ENCODE measurements at regions of chr14 and their contacts with region 1.

Region 1: GRCh38 chr14:20613094-20614037 is 22.2 kb upstream of the RNASE12 start:
- DNase-seq: peak; percentile 66 to 95 (median 80)
- ATAC-seq: peak; percentile 84
- H3K4me3 ChIP-seq: peak overlapping the region; percentile 57
- H3K4me3 Mint-ChIP-seq: no peak overlapping the region
- H3K27ac ChIP-seq: peak overlapping the region in 1 of 2 experiments; percentile 42
- H3K27ac Mint-ChIP-seq: no peak overlapping the region
- H3K4me1 ChIP-seq: peaks cover 20% of the 10 kb centered on the region
- H3K4me1 Mint-ChIP-seq: peaks cover 7% of the 10 kb centered on the region
- H3K27me3 ChIP-seq: no peaks in the 10 kb centered on the region
- H3K27me3 Mint-ChIP-seq: peaks cover 2% of the 10 kb centered on the region
- CTCF ChIP-seq: peak; percentile 60

Region 2: DNA sequence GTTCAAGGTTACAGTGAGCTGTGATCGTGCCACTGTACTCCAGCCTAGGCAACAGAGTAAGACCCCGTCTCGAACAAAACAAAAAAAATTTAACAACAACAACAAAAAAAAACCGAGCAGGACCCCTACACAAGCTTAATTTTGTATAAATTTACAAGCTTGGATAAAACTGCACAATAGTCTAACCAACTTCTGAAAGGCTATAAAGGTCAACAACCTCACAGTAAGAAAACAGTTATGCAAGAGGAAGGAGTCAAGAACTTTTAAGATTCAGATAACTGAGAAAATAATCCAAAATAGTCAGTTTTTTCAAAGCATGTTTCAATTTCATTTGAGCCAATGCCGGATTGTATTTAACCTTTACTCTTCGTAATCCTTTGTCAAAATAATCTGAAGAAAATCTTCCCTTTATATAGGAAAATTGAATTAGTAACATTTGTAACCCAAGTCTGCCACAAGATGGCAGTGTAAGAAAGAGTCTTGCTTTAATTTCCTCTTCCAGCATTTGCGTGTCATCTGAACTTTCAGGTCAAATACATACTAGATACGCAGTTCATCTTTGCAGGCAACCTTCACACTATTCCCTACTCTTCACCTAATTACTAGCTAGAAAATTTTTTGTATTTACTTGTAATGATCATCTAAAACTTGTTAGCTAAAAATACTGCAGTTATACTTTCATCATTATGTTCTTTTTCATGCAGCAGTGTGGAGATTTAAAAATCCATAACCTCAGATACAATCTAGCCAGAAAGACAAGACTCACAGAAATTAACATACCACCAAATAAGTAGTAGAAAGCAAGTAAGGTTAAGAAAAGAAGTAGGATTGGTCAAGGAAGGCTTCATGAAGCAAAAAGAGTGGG is 286.1 kb before region 1 on chr14:
- CTCF ChIA-PET with region 1: interaction called, 103 read pairs
- POLR2A ChIA-PET with region 1: interaction called, 3 read pairs
- intact Hi-C with region 1: loop called (anchors 1 kb)
- DNase-seq: peak in 3 of 9 experiments; percentile 35 to 83 (median 76)
- ATAC-seq: peak; percentile 62
- H3K4me3 ChIP-seq: no peak overlapping the region
- H3K4me3 Mint-ChIP-seq: no peak overlapping the region
- H3K27ac ChIP-seq: no peak overlapping the region
- H3K27ac Mint-ChIP-seq: peak overlapping the region; percentile 62
- H3K4me1 ChIP-seq: peaks cover 6% of the 10 kb centered on the region
- H3K4me1 Mint-ChIP-seq: peaks cover 26% of the 10 kb centered on the region
- H3K27me3 ChIP-seq: no peaks in the 10 kb centered on the region
- H3K27me3 Mint-ChIP-seq: no peaks in the 10 kb centered on the region
- CTCF ChIP-seq: peak; percentile 98

Region 3: DNA sequence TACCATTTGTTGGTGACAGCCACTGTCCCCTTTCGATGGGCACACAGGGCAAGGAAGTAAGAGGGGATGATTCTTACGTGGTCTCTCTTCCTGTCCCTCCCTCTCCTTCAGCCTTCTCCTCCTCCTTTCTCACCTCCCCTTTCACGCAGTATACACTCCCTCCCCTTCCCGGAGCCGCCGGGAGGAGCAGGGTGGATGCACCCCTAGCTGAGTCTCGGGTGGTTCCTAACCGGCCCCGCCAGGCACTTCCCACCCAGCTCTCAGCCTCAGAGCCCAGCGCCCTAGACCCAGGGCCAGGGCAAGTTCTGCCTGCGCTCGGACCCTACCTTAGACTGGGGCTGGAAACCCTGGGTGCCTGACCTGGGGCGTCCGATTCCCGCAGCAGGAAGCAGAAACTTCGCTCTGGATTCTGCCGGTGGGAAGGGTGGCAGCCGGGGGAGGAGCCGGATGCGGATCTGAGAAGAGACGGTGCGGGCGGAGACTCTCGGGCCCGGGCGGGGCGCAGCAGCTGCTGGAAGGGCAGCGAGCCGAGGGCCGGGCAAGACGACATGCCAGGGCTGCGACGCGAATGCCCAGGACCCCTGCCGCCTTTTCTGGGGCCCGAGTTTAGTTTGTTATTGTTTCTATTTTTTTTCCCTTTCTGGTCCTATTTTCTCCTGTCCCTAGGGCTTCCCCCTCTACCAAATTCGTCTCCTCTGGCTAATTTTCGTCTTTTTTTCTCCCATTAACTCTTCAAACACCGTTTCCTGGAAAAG is 200.1 kb before region 1 on chr14 and contains the start of gene TEP1:
- CTCF ChIA-PET with region 1: interaction called, 42 read pairs
- POLR2A ChIA-PET with region 1: interaction called, 5 read pairs
- intact Hi-C with region 1: loop called (anchors 1 to 2 kb)
- DNase-seq: peak; percentile 33 to 84 (median 74)
- ATAC-seq: peak; percentile 63
- H3K4me3 ChIP-seq: peak within 1 kb of the TSS; percentile 66 to 97
- H3K4me3 Mint-ChIP-seq: peak within 1 kb of the TSS; percentile 91
- H3K27ac ChIP-seq: peak within 1 kb of the TSS; percentile 80 to 85
- H3K27ac Mint-ChIP-seq: peak within 1 kb of the TSS; percentile 93
- H3K4me1 ChIP-seq: peaks cover 31% of the 10 kb centered on the region
- H3K4me1 Mint-ChIP-seq: peaks cover 48% of the 10 kb centered on the region
- H3K27me3 ChIP-seq: no peaks in the 10 kb centered on the region
- H3K27me3 Mint-ChIP-seq: no peaks in the 10 kb centered on the region
- CTCF ChIP-seq: no peak
- total RNA-seq, gene TEP1: 16.9 to 20.2 TPM

Region 4: DNA sequence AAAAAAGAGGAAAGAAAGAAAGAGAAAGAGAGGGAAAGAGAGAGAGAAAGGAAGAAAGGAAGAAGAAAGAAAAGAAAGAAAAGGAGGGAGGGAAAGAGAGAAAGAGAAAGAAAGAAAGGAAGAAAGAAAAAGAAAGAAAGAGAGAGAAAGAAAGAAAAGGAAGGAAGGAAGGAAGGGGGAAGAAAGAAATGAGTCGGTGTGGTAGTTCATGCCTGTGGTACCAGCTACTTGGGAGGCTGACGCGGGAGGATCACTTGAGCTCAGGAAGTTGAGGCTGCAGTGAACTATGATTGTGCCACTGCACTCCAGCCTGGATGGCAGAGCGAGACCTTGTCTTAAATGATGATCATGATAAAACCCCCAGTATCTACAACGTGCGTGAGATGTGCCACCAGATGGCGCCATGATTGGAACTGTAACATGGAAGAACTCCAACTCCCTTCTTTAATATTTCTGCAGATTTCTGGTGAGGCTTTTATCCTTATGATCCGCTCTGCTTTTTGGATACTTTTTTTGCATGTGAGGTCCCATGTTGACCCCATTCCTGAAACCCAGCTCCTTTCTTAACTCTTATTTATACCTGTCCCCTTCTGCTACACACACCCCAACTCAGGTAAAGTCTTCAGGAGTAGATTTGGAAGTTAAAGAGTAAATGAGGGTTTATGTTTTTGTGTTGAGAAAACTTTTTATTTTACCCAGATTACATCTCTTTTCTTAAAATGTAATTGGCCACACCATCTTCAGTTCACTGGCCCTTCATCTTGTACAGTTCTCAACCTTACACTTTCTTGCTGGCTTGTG is 82.4 kb before region 1 on chr14:
- CTCF ChIA-PET with region 1: interaction called, 9 read pairs
- POLR2A ChIA-PET with region 1: no interaction called
- intact Hi-C with region 1: loop called (anchors 1 kb)
- DNase-seq: peak; percentile 37 to 83 (median 72)
- ATAC-seq: peak; percentile 76
- H3K4me3 ChIP-seq: no peak overlapping the region
- H3K4me3 Mint-ChIP-seq: peak overlapping the region; percentile 48
- H3K27ac ChIP-seq: no peak overlapping the region
- H3K27ac Mint-ChIP-seq: no peak overlapping the region
- H3K4me1 ChIP-seq: no peaks in the 10 kb centered on the region
- H3K4me1 Mint-ChIP-seq: peaks cover 7% of the 10 kb centered on the region
- H3K27me3 ChIP-seq: peaks cover 0 to 2% of the 10 kb centered on the region in 2 experiments
- H3K27me3 Mint-ChIP-seq: peaks cover 8% of the 10 kb centered on the region
- CTCF ChIP-seq: peak; percentile 79

Region 5: GRCh38 chr14:20587489-20588154 is 25.7 kb before region 1 on chr14 and contains the start of gene RNASE11:
- CTCF ChIA-PET with region 1: no interaction called
- POLR2A ChIA-PET with region 1: no interaction called
- intact Hi-C with region 1: no loop called
- DNase-seq: no peak
- ATAC-seq: no peak
- H3K4me3 ChIP-seq: no peak within 1 kb of the TSS
- H3K4me3 Mint-ChIP-seq: no peak within 1 kb of the TSS
- H3K27ac ChIP-seq: no peak within 1 kb of the TSS
- H3K27ac Mint-ChIP-seq: no peak within 1 kb of the TSS
- H3K4me1 ChIP-seq: no peaks in the 10 kb centered on the region
- H3K4me1 Mint-ChIP-seq: peaks cover 1% of the 10 kb centered on the region
- H3K27me3 ChIP-seq: no peaks in the 10 kb centered on the region
- H3K27me3 Mint-ChIP-seq: peaks cover 8% of the 10 kb centered on the region
- CTCF ChIP-seq: no peak
- total RNA-seq, gene RNASE11: not detected

Region 6: DNA sequence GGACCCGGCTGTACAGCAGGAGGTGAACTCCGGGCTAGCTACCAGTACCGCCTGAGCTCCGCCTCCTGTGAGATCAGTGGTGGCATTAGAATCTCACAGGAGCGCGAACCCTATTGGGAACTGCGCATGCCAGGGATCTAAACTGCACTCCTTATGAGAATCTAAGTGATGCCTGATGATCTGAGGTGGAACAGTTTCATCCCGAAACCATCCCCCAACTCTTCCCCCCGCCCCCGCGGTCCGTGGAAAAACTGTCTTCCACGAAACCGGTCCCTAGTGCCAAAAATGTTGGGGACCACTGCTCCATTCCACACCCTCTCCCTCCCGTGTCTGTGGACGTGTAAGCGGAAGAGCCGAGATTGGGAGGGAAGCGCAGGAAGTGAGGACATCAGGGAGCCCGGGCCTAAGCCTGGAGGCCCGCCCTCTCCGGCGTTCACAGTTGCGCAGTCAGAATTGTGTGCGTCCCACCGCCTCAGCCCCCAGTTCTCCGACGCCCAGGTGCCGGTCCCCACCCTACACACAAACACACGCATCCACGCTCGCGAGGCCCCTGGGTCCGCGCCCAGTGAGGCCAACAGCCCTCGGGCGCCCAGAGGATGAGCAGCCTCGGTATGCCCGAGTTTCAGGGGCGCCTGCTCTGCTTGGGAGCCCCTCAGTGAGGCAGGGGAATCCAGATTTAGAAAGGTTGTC is 69.2 kb after region 1 on chr14:
- CTCF ChIA-PET with region 1: interaction called, 53 read pairs
- POLR2A ChIA-PET with region 1: interaction called, 23 read pairs
- intact Hi-C with region 1: loop called (anchors 1 kb)
- DNase-seq: peak; percentile 63 to 94 (median 80)
- ATAC-seq: peak; percentile 65
- H3K4me3 ChIP-seq: peak overlapping the region; percentile 67 to 93
- H3K4me3 Mint-ChIP-seq: no peak overlapping the region
- H3K27ac ChIP-seq: peak overlapping the region; percentile 80 to 90
- H3K27ac Mint-ChIP-seq: no peak overlapping the region
- H3K4me1 ChIP-seq: peaks cover 24% of the 10 kb centered on the region
- H3K4me1 Mint-ChIP-seq: peaks cover 29% of the 10 kb centered on the region
- H3K27me3 ChIP-seq: no peaks in the 10 kb centered on the region
- H3K27me3 Mint-ChIP-seq: no peaks in the 10 kb centered on the region
- CTCF ChIP-seq: no peak

Region 7: GRCh38 chr14:20989572-20990551 is 376.5 kb after region 1 on chr14 and contains the start of gene METTL17:
- CTCF ChIA-PET with region 1: no interaction called
- POLR2A ChIA-PET with region 1: no interaction called
- intact Hi-C with region 1: loop called in 1 of 2 experiments (anchors 1 kb)
- DNase-seq: peak; percentile 65 to 94 (median 85)
- ATAC-seq: peak; percentile 92
- H3K4me3 ChIP-seq: peak within 1 kb of the TSS; percentile 92 to 96
- H3K4me3 Mint-ChIP-seq: peak within 1 kb of the TSS; percentile 95
- H3K27ac ChIP-seq: peak within 1 kb of the TSS; percentile 65 to 73
- H3K27ac Mint-ChIP-seq: peak within 1 kb of the TSS; percentile 94
- H3K4me1 ChIP-seq: peaks cover 18% of the 10 kb centered on the region
- H3K4me1 Mint-ChIP-seq: peaks cover 28% of the 10 kb centered on the region
- H3K27me3 ChIP-seq: no peaks in the 10 kb centered on the region
- H3K27me3 Mint-ChIP-seq: no peaks in the 10 kb centered on the region
- CTCF ChIP-seq: peak; percentile 28
- total RNA-seq, gene METTL17: 82.3 to 88.8 TPM

Measured in CD8-positive, alpha-beta T cell (primary cell).